Esophagus muscularis mucosa (tissue), 4 donors: ENCODE measurements at regions of chr5 and their contacts with region 1.

Region 1: GRCh38 chr5:171907725-171908343 is 98.6 kb downstream of the FBXW11 start:
- DNase-seq: no peak
- H3K4me3 ChIP-seq: no peak overlapping the region
- H3K27ac ChIP-seq: no peak overlapping the region
- H3K4me1 ChIP-seq: peaks cover 10 to 19% (median 14%) of the 10 kb centered on the region in 4 donors
- H3K27me3 ChIP-seq: no peaks in the 10 kb centered on the region
- CTCF ChIP-seq: peak; percentile 68 to 77 (median 74)
- EP300 ChIP-seq: no peak
- POLR2A ChIP-seq: no peak

Region 2: GRCh38 chr5:171418316-171418981 is 489.4 kb before region 1 on chr5:
- intact Hi-C with region 1: loop called (anchors 2 kb)
- DNase-seq: peak; percentile 95
- H3K4me3 ChIP-seq: peak overlapping the region; percentile 45 to 62 (median 52)
- H3K27ac ChIP-seq: peak overlapping the region in 1 of 4 donors; percentile 26
- H3K4me1 ChIP-seq: peaks cover 27 to 37% (median 34%) of the 10 kb centered on the region in 4 donors
- H3K27me3 ChIP-seq: peaks cover 0 to 31% (median 0%) of the 10 kb centered on the region in 4 donors
- CTCF ChIP-seq: peak; percentile 88 to 99 (median 89)
- EP300 ChIP-seq: no peak
- POLR2A ChIP-seq: no peak

Region 3: GRCh38 chr5:171484460-171484899 is 423.4 kb before region 1 on chr5:
- intact Hi-C with region 1: loop called (anchors 10 kb)
- DNase-seq: no peak
- H3K4me3 ChIP-seq: no peak overlapping the region
- H3K27ac ChIP-seq: peak overlapping the region in 1 of 4 donors; percentile 69
- H3K4me1 ChIP-seq: peaks cover 0 to 19% (median 18%) of the 10 kb centered on the region in 4 donors
- H3K27me3 ChIP-seq: peaks cover 0 to 11% (median 0%) of the 10 kb centered on the region in 4 donors
- CTCF ChIP-seq: peak; percentile 53 to 70 (median 56)
- EP300 ChIP-seq: no peak
- POLR2A ChIP-seq: no peak

Region 4: GRCh38 chr5:171630027-171630669 is 277.7 kb before region 1 on chr5:
- intact Hi-C with region 1: loop called (anchors 10 kb)
- DNase-seq: no peak
- H3K4me3 ChIP-seq: peak overlapping the region in 2 of 4 donors; percentile 17 to 40
- H3K27ac ChIP-seq: no peak overlapping the region
- H3K4me1 ChIP-seq: peaks cover 6 to 14% (median 10%) of the 10 kb centered on the region in 4 donors
- H3K27me3 ChIP-seq: peaks cover 0 to 87% (median 8%) of the 10 kb centered on the region in 4 donors
- CTCF ChIP-seq: peak; percentile 44 to 60 (median 46)
- EP300 ChIP-seq: no peak
- POLR2A ChIP-seq: no peak

Region 5: DNA sequence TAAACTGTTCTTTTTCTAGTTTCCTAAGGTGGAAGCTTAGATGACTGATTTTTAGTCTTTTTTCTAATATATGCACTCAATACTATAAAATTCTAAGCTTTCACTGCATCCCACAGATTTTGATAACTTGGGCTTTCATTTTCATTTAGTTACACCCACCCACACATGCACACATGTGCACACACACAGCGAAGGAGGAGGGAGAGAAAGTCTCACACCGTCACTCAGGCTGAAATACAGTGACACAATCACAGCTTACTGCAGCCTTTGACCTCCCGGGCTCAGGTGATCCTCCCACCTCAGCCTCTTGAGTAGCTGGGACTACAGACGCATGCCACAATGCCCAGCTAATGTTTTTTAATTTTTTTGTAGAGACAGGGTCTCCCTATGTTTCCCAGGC is 25.7 kb before region 1 on chr5:
- intact Hi-C with region 1: no loop called
- DNase-seq: no peak
- H3K4me3 ChIP-seq: no peak overlapping the region
- H3K27ac ChIP-seq: no peak overlapping the region
- H3K4me1 ChIP-seq: no peaks in the 10 kb centered on the region
- H3K27me3 ChIP-seq: no peaks in the 10 kb centered on the region
- CTCF ChIP-seq: no peak
- EP300 ChIP-seq: no peak
- POLR2A ChIP-seq: no peak

Region 6: GRCh38 chr5:172035039-172035438 is 127.2 kb after region 1 on chr5:
- intact Hi-C with region 1: loop called (anchors 1 kb)
- DNase-seq: no peak
- H3K4me3 ChIP-seq: no peak overlapping the region
- H3K27ac ChIP-seq: no peak overlapping the region
- H3K4me1 ChIP-seq: peaks cover 0 to 3% (median 1%) of the 10 kb centered on the region in 4 donors
- H3K27me3 ChIP-seq: no peaks in the 10 kb centered on the region
- CTCF ChIP-seq: no peak
- EP300 ChIP-seq: no peak
- POLR2A ChIP-seq: no peak